HCT116 (cell line): ENCODE measurements at regions of chr13 and their contacts with region 1.

Region 1: DNA sequence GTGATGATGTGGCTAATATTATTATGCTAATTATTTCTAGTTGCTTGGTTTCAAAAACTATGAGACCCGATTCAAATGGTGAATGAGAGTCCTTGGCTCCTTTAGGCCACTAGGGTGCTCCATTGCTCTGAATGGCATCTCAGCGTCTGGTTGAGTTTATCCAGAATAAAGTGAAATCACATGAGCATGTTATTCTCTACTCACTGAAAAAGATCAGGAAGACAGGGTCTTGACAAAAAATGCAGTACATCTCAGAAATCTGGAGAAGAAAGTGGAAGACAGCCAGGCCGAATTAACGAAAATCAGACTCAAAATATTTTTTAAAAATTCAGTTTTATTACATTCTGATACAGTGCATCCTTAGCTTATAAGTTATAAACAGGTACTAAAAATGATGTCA is 516.2 kb downstream of the MYO16 start:
- DNase-seq: peak; percentile 58
- ATAC-seq: peak; percentile 84
- H3K4me3 ChIP-seq: no peak overlapping the region
- H3K27ac ChIP-seq: no peak overlapping the region
- H3K4me1 ChIP-seq: peaks cover 3 to 41% of the 10 kb centered on the region in 2 experiments; a peak in 3 of 4 replicates
- H3K27me3 ChIP-seq: no peaks in the 10 kb centered on the region
- CTCF ChIP-seq: peak; percentile 68 to 93 (median 86); a peak in 5 of 6 replicates
- POLR2A ChIP-seq: no peak
- RAD21 ChIP-seq: peak; percentile 92

Region 2: GRCh38 chr13:108700435-108701170 is 445.0 kb before region 1 on chr13:
- CTCF ChIA-PET with region 1: no interaction called
- POLR2A ChIA-PET with region 1: no interaction called
- RAD21 ChIA-PET with region 1: no interaction called
- intact Hi-C with region 1: no loop called
- DNase-seq: no peak
- ATAC-seq: no peak
- H3K4me3 ChIP-seq: no peak overlapping the region
- H3K27ac ChIP-seq: no peak overlapping the region
- H3K4me1 ChIP-seq: no peaks in the 10 kb centered on the region
- H3K27me3 ChIP-seq: no peaks in the 10 kb centered on the region
- CTCF ChIP-seq: no peak
- POLR2A ChIP-seq: no peak
- RAD21 ChIP-seq: no peak

Region 3: DNA sequence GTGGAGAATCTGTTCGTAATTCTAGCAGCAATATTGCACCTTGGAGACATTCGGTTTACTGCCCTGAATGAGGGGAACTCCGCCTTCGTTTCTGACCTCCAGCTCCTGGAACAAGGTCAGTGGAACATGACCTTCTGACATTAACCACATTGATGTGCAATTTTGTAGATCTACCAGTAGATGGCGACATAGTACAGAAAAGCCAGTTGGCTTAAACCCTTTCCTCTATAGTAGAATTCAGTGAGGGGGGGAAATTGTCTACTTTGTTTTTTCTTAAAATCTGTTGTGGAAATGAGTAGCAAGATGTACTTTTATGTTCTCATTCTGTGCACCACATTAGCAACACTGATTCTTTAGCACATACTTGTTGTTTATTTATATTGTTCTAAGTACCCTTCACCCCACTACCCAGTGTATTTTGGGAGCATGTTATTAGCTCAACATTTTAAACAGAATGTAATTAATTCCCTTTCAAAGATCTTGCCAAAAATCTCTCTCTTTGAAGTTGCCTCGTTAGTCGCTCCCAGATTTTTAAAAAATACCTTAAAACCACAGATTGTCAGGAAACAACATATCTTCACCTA is 184.0 kb before region 1 on chr13:
- CTCF ChIA-PET with region 1: interaction called, 9 read pairs
- POLR2A ChIA-PET with region 1: no interaction called
- RAD21 ChIA-PET with region 1: no interaction called
- intact Hi-C with region 1: loop called (anchors 5 kb)
- DNase-seq: peak; percentile 31
- ATAC-seq: peak; percentile 61
- H3K4me3 ChIP-seq: no peak overlapping the region
- H3K27ac ChIP-seq: no peak overlapping the region
- H3K4me1 ChIP-seq: peaks cover 5 to 15% of the 10 kb centered on the region in 2 experiments; a peak in 3 of 4 replicates
- H3K27me3 ChIP-seq: no peaks in the 10 kb centered on the region
- CTCF ChIP-seq: peak; percentile 59 to 88 (median 78)
- POLR2A ChIP-seq: no peak
- RAD21 ChIP-seq: peak; percentile 92

Region 4: GRCh38 chr13:109043636-109044035 is 102.0 kb before region 1 on chr13:
- CTCF ChIA-PET with region 1: no interaction called
- POLR2A ChIA-PET with region 1: no interaction called
- RAD21 ChIA-PET with region 1: no interaction called
- intact Hi-C with region 1: no loop called
- DNase-seq: no peak
- ATAC-seq: no peak
- H3K4me3 ChIP-seq: no peak overlapping the region
- H3K27ac ChIP-seq: no peak overlapping the region
- H3K4me1 ChIP-seq: no peaks in the 10 kb centered on the region
- H3K27me3 ChIP-seq: no peaks in the 10 kb centered on the region
- CTCF ChIP-seq: no peak
- POLR2A ChIP-seq: no peak
- RAD21 ChIP-seq: no peak

Region 5: DNA sequence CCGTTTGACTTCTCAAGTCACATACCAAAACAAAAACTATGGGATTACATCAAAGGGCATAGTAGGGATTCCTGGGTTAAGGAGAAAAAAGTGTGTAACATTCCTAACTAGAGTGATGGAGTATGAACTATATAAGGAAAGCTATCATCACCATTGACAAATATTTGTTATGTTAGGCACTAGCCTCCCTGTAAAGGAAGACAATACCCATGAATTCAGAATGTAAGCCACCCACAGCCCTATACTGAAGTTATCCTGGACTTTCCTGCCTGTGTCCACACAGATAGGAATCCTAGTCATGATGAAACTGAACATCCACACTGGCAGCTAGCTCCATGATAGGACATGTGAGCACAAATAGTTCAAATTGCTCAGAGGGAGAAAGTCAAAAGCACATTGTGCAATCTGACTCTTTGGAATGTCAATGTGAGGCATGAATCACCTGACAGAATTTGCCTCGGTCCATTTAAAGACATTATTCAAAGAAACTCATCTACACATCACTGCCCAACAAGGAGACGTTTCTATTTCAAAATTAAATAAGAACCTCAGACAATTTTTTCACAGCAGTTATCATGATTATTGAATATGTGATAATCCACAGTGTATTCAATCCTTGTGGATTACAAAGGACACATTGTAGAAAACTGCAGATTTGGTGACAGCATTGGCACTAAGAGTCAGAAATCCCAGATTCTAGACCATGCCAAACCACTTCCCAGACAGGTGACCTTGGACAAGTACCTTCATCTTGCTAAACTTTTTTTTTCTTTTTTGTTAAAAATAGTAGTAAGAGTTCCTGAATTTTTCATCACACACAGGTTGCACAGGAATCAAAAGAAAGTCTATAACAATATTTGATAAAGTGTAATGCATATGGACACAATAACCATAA is 111.5 kb after region 1 on chr13:
- CTCF ChIA-PET with region 1: no interaction called
- POLR2A ChIA-PET with region 1: no interaction called
- RAD21 ChIA-PET with region 1: no interaction called
- intact Hi-C with region 1: loop called (anchors 5 kb)
- DNase-seq: peak; percentile 78
- ATAC-seq: peak; percentile 75
- H3K4me3 ChIP-seq: peak overlapping the region in 1 of 2 experiments; percentile 18; a peak in 1 of 4 replicates
- H3K27ac ChIP-seq: peak overlapping the region; percentile 59; the same call in 1 of the 2 replicates
- H3K4me1 ChIP-seq: peaks cover 32 to 94% of the 10 kb centered on the region in 2 experiments
- H3K27me3 ChIP-seq: no peaks in the 10 kb centered on the region
- CTCF ChIP-seq: no peak
- POLR2A ChIP-seq: no peak
- RAD21 ChIP-seq: no peak

Region 6: GRCh38 chr13:109412283-109412901 is 266.8 kb after region 1 on chr13:
- CTCF ChIA-PET with region 1: no interaction called
- POLR2A ChIA-PET with region 1: no interaction called
- RAD21 ChIA-PET with region 1: no interaction called
- intact Hi-C with region 1: loop called (anchors 10 kb)
- DNase-seq: peak; percentile 18
- ATAC-seq: peak; percentile 93
- H3K4me3 ChIP-seq: no peak overlapping the region
- H3K27ac ChIP-seq: no peak overlapping the region
- H3K4me1 ChIP-seq: peaks cover 0 to 10% of the 10 kb centered on the region in 2 experiments; a peak in 3 of 4 replicates
- H3K27me3 ChIP-seq: no peaks in the 10 kb centered on the region
- CTCF ChIP-seq: no peak
- POLR2A ChIP-seq: no peak
- RAD21 ChIP-seq: no peak

Region 7: GRCh38 chr13:110108347-110109174 is 962.9 kb after region 1 on chr13:
- CTCF ChIA-PET with region 1: no interaction called
- POLR2A ChIA-PET with region 1: no interaction called
- RAD21 ChIA-PET with region 1: no interaction called
- intact Hi-C with region 1: loop called (anchors 5 kb)
- DNase-seq: peak; percentile 53
- ATAC-seq: peak; percentile 87
- H3K4me3 ChIP-seq: no peak overlapping the region
- H3K27ac ChIP-seq: no peak overlapping the region
- H3K4me1 ChIP-seq: no peaks in the 10 kb centered on the region; a peak in 1 of 4 replicates
- H3K27me3 ChIP-seq: no peaks in the 10 kb centered on the region
- CTCF ChIP-seq: peak; percentile 70 to 72 (median 71)
- POLR2A ChIP-seq: no peak
- RAD21 ChIP-seq: peak; percentile 94